Dendritic cell treated with granulocyte-macrophage colony-stimulating factor and Interleukin-4, amounts not matched to agents 40 ng/mL and 50 ng/mL, for 4 days (primary cell): ENCODE measurements at regions of chr16 and their contacts with region 1.

Region 1: GRCh38 chr16:73956587-73957494 is 339.8 kb upstream of the PSMD7 start:
- H3K4me3 Mint-ChIP-seq: no peak overlapping the region
- H3K27ac Mint-ChIP-seq: no peak overlapping the region
- H3K4me1 Mint-ChIP-seq: no peaks in the 10 kb centered on the region
- H3K27me3 Mint-ChIP-seq: no peaks in the 10 kb centered on the region

Region 2: DNA sequence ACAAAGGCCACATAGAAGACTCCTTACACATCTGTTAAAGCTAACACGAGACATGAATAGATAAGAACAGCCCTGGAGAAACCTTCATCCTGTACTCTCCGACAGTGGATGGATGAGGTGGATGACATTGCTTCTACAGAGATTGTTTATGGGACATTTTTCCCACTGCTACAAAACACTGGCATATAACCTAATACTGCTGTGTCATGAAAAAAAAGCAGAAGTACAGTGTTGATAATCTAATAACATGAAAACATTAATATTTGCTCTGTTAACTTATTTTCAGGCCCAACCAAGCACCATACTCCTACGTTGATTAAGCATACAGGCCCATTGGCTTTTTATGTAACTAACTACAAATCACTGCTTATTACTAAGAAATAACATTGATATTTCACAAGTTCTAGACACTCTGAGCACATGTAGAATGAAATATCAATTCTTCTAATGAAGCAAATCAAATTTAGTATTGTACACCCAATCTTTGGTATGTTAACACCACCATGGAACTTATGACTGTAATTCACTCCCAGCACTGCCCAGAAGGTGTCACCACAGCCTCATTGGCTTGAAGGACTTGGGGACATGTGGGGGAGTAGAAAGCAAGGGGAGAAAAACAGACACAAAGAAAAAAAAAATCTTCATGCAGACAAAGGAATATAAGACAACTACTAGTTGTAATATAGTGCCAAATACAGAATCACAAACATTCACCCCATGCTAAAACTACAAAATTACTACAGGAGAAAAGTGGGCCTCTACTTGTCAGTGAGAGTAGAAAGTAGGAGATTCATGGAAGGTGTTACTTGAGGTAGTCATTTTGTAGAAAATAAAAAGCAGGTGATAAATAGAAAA is 1454.9 kb before region 1 on chr16:
- intact Hi-C with region 1: loop called (anchors 5 kb)
- H3K4me3 Mint-ChIP-seq: no peak overlapping the region
- H3K27ac Mint-ChIP-seq: no peak overlapping the region
- H3K4me1 Mint-ChIP-seq: no peaks in the 10 kb centered on the region
- H3K27me3 Mint-ChIP-seq: no peaks in the 10 kb centered on the region

Region 3: GRCh38 chr16:73713778-73714495 is 242.9 kb before region 1 on chr16:
- intact Hi-C with region 1: no loop called
- H3K4me3 Mint-ChIP-seq: no peak overlapping the region
- H3K27ac Mint-ChIP-seq: no peak overlapping the region
- H3K4me1 Mint-ChIP-seq: no peaks in the 10 kb centered on the region
- H3K27me3 Mint-ChIP-seq: no peaks in the 10 kb centered on the region

Region 4: GRCh38 chr16:74019612-74020011 is 62.8 kb after region 1 on chr16:
- intact Hi-C with region 1: no loop called
- H3K4me3 Mint-ChIP-seq: no peak overlapping the region
- H3K27ac Mint-ChIP-seq: no peak overlapping the region
- H3K4me1 Mint-ChIP-seq: no peaks in the 10 kb centered on the region
- H3K27me3 Mint-ChIP-seq: no peaks in the 10 kb centered on the region

Region 5: DNA sequence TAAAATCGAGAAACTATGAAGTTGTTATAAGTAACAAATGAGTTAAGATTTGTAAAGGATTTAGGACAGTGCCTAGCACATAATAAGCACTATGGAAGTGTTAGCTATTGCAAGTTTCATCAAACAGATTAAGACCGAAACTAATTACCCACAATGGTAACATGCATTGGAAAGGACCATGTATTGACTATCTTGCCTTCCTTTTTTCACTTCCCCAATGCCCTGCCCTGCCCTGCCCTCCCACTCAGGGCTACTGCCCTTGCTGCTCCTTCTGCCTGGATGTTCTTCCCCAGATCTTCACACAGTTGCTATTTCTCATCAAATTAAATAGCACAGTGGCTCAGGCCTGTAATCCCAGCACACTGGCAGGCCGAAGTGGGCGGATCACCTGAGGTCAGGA is 137.7 kb after region 1 on chr16:
- intact Hi-C with region 1: loop called (anchors 10 kb)
- H3K4me3 Mint-ChIP-seq: peak overlapping the region; percentile 17
- H3K27ac Mint-ChIP-seq: peak overlapping the region; percentile 78
- H3K4me1 Mint-ChIP-seq: peaks cover 16% of the 10 kb centered on the region
- H3K27me3 Mint-ChIP-seq: no peaks in the 10 kb centered on the region